ENCODE measurements at regions of chr11 and their contacts with region 1.

Region 1: DNA sequence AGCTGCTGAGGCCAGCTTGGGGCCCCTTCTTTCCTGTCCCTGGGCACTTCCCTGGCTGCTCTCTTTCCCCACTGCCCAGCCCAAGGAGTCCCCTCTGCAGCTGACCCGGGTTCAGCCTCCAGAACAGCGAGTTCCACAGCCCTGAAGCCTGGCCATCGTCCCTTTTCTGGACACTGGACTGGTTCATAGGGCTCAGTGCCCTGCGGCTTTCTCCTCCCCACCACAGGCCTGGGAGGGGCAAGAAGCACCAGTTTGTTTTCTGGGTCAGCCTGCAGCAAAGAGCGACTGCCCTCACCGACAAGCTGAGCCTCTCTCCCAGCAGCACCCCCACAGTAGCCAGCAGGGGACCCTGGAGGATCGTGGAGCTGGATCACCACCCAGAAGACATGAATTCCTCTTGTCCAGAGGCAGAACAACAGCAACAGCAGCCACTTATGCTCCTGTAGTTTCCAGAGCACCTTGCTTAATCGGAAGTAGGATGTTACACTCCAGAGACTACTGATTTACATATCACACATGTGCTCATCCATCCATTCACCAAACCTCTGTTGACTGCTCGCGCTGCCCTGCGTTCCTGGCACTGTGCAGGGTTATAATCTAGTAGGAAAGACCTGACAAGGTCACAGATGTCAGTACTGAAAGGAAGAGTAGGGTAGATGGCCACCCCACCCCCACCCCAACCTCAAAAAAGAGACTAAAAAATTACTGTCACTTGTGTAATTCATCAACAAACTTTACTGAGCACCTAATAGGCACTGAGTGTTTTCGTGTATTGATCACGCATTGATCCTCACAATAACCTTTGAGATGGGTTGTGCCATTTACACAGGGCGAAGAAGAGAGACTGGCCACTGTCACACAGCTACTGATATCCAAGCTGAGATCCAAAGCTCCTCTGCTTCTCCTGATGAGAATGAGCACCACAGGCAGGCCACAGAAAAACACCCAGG is 13.0 kb upstream of the CXCR5 start:
- DNase-seq: peak in 6 of 9 donors; percentile 44 to 54 (median 51)
- ATAC-seq: peak; percentile 28
- H3K4me3 ChIP-seq: peak overlapping the region; percentile 60
- H3K4me3 Mint-ChIP-seq: peak overlapping the region; percentile 67 to 91 (median 82)
- H3K27ac ChIP-seq: peak overlapping the region; percentile 94
- H3K27ac Mint-ChIP-seq: peak overlapping the region; percentile 94 to 100 (median 99)
- H3K4me1 ChIP-seq: peaks cover 51 to 58% of the 10 kb centered on the region in 2 donors
- H3K4me1 Mint-ChIP-seq: peaks cover 29 to 61% (median 57%) of the 10 kb centered on the region in 7 donors
- H3K27me3 ChIP-seq: no peaks in the 10 kb centered on the region
- H3K27me3 Mint-ChIP-seq: no peaks in the 10 kb centered on the region

Region 2: GRCh38 chr11:118834427-118835028 is 36.1 kb before region 1 on chr11:
- CTCF ChIA-PET with region 1: no interaction called
- POLR2A ChIA-PET with region 1: interaction called, 5 read pairs
- intact Hi-C with region 1: loop called in 1 of 2 experiments (anchors 5 kb)
- DNase-seq: peak in 2 of 9 donors; percentile 6 to 19
- ATAC-seq: peak; percentile 48
- H3K4me3 ChIP-seq: peak overlapping the region; percentile 22
- H3K4me3 Mint-ChIP-seq: peak overlapping the region; percentile 14 to 75 (median 59)
- H3K27ac ChIP-seq: no peak overlapping the region
- H3K27ac Mint-ChIP-seq: peak overlapping the region in 8 of 9 donors; percentile 12 to 92 (median 48)
- H3K4me1 ChIP-seq: peaks cover 4 to 7% of the 10 kb centered on the region in 2 donors
- H3K4me1 Mint-ChIP-seq: peaks cover 11 to 22% (median 19%) of the 10 kb centered on the region in 7 donors
- H3K27me3 ChIP-seq: no peaks in the 10 kb centered on the region
- H3K27me3 Mint-ChIP-seq: no peaks in the 10 kb centered on the region

Region 3: GRCh38 chr11:118856314-118856713 is 14.4 kb before region 1 on chr11:
- CTCF ChIA-PET with region 1: interaction called, 6 read pairs
- POLR2A ChIA-PET with region 1: interaction called, 13 read pairs
- intact Hi-C with region 1: no loop called
- DNase-seq: no peak
- ATAC-seq: no peak
- H3K4me3 ChIP-seq: no peak overlapping the region
- H3K4me3 Mint-ChIP-seq: no peak overlapping the region
- H3K27ac ChIP-seq: no peak overlapping the region
- H3K27ac Mint-ChIP-seq: no peak overlapping the region
- H3K4me1 ChIP-seq: no peaks in the 10 kb centered on the region
- H3K4me1 Mint-ChIP-seq: peaks cover 3 to 27% (median 21%) of the 10 kb centered on the region in 7 donors
- H3K27me3 ChIP-seq: no peaks in the 10 kb centered on the region
- H3K27me3 Mint-ChIP-seq: no peaks in the 10 kb centered on the region

Region 4: DNA sequence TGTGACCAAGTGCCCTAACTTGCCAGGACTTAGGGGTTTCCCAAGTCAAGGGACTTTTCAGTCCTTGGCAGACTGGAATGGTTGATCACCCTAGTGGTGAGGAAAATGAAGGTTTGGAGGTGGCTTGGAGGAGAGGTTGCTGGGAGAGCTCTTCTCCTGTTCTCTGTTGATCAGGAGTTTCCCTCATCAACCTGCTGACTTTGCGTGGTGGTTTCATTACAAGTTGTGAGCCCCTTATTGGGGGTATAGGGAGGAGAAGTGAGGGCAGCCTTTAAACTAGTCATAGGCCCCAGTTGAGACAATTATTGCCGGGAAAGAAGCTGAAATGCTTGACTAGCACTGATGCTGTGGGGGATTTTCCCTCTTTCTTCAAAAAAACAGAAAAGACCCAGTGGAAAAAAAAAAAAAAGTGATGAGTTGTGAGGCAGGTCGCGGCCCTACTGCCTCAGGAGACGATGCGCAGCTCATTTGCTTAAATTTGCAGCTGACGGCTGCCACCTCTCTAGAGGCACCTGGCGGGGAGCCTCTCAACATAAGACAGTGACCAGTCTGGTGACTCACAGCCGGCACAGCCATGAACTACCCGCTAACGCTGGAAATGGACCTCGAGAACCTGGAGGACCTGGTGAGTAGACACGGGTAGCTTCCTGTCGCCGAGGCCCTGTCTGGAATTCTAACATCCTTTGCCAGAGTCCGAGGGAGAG is 12.8 kb after region 1 on chr11 and contains the start of gene CXCR5:
- CTCF ChIA-PET with region 1: interaction called, 8 read pairs
- POLR2A ChIA-PET with region 1: interaction called, 32 read pairs
- intact Hi-C with region 1: loop called (anchors 1 kb)
- DNase-seq: peak in 1 of 9 donors; percentile 44
- ATAC-seq: peak; percentile 70
- H3K4me3 ChIP-seq: peak within 1 kb of the TSS; percentile 21
- H3K4me3 Mint-ChIP-seq: peak within 1 kb of the TSS in 9 of 10 donors; percentile 29 to 78 (median 50)
- H3K27ac ChIP-seq: peak within 1 kb of the TSS; percentile 7
- H3K27ac Mint-ChIP-seq: peak within 1 kb of the TSS; percentile 61 to 89 (median 76)
- H3K4me1 ChIP-seq: peaks cover 24 to 51% of the 10 kb centered on the region in 2 donors
- H3K4me1 Mint-ChIP-seq: peaks cover 51 to 90% (median 79%) of the 10 kb centered on the region in 7 donors
- H3K27me3 ChIP-seq: no peaks in the 10 kb centered on the region
- H3K27me3 Mint-ChIP-seq: no peaks in the 10 kb centered on the region
- total RNA-seq, gene CXCR5: 0.41 to 2.9 (median 2.1) TPM

Region 5: DNA sequence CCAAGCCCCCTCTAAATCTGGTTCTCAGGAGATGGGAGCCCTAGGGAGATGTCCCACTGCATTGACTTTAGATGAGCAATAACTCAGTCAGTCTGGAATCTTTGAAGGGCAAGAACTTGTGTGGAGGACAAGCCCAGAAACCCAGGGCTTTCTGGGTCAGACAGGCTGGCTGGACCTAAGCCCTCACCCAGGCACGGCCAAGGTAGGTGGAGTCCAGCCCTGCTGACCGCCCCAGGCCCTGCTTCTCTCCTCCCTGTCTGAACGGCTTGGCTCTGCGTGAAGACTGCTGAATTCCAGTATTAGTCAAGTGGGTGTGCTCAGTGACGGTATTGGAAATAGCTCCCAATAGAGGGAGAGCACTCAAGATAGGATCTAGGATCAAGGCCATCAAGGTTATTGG is 19.1 kb after region 1 on chr11:
- CTCF ChIA-PET with region 1: interaction called, 17 read pairs
- POLR2A ChIA-PET with region 1: no interaction called
- intact Hi-C with region 1: loop called (anchors 1 kb)
- DNase-seq: no peak
- ATAC-seq: no peak
- H3K4me3 ChIP-seq: no peak overlapping the region
- H3K4me3 Mint-ChIP-seq: peak overlapping the region in 5 of 10 donors; percentile 8 to 82 (median 59)
- H3K27ac ChIP-seq: no peak overlapping the region
- H3K27ac Mint-ChIP-seq: peak overlapping the region in 6 of 9 donors; percentile 52 to 98 (median 96)
- H3K4me1 ChIP-seq: peaks cover 58 to 71% of the 10 kb centered on the region in 2 donors
- H3K4me1 Mint-ChIP-seq: peaks cover 53 to 92% (median 83%) of the 10 kb centered on the region in 7 donors
- H3K27me3 ChIP-seq: no peaks in the 10 kb centered on the region
- H3K27me3 Mint-ChIP-seq: no peaks in the 10 kb centered on the region

Region 6: GRCh38 chr11:118895142-118896039 is 24.7 kb after region 1 on chr11:
- CTCF ChIA-PET with region 1: interaction called, 17 read pairs
- POLR2A ChIA-PET with region 1: no interaction called
- intact Hi-C with region 1: loop called (anchors 1 kb)
- DNase-seq: peak; percentile 54 to 87 (median 81)
- ATAC-seq: peak; percentile 86
- H3K4me3 ChIP-seq: peak overlapping the region; percentile 22
- H3K4me3 Mint-ChIP-seq: peak overlapping the region; percentile 76 to 86 (median 81)
- H3K27ac ChIP-seq: peak overlapping the region; percentile 94
- H3K27ac Mint-ChIP-seq: peak overlapping the region; percentile 94 to 99 (median 97)
- H3K4me1 ChIP-seq: peaks cover 64 to 67% of the 10 kb centered on the region in 2 donors
- H3K4me1 Mint-ChIP-seq: peaks cover 59 to 78% (median 71%) of the 10 kb centered on the region in 7 donors
- H3K27me3 ChIP-seq: no peaks in the 10 kb centered on the region
- H3K27me3 Mint-ChIP-seq: no peaks in the 10 kb centered on the region

Measured in naive thymus-derived CD4-positive, alpha-beta T cell (primary cell).